ENCODE measurements at regions of chr18 and their contacts with region 1.

Region 1: DNA sequence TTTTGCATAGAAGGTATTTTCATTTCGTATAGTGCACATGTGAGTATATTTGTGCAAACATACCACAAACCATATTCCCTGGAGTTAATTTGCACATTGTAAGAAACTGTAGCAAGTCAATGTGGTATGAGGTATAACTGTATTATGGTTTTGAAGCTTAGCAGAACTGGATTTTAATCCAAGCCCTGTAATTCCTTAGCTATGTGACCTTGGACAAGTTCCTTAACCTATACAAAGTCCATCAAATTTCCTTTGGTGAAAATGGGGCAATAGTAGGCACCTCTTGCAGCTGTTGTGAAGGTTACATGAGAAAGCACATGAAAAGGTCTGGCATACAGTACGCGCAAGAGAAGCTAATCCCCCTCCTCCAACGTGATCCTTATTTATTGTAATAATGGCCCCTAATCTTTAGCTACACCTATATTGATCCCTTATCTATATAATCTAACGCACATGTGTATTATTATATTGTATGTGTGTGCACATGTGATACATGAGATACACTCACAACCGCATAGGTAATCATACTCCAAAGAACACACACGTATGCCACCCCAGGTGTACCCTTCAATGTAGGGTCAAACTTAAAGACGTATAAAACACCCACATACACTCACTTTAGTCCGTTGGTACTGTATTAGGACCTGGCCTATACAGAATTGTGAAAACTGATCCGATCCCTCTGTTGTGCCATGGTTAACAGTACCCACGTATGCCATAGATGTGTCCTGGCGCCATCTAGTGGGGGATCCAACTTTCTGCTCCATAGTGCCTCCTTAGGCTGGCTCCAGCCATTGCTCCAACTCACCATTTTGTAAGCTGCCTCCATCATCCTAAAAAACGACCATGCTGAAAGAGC is 402.9 kb upstream of the SLC14A2 start:
- DNase-seq: peak; percentile 87
- H3K4me3 Mint-ChIP-seq: no peak overlapping the region
- H3K27ac Mint-ChIP-seq: no peak overlapping the region
- H3K4me1 Mint-ChIP-seq: no peaks in the 10 kb centered on the region
- H3K27me3 Mint-ChIP-seq: no peaks in the 10 kb centered on the region
- CTCF ChIP-seq: peak; percentile 99

Region 2: GRCh38 chr18:43620936-43621335 is 1591.5 kb before region 1 on chr18:
- CTCF ChIA-PET with region 1: no interaction called
- intact Hi-C with region 1: loop called (anchors 2 kb)
- DNase-seq: peak; percentile 3
- H3K4me3 Mint-ChIP-seq: no peak overlapping the region
- H3K27ac Mint-ChIP-seq: no peak overlapping the region
- H3K4me1 Mint-ChIP-seq: peaks cover 9% of the 10 kb centered on the region
- H3K27me3 Mint-ChIP-seq: no peaks in the 10 kb centered on the region
- CTCF ChIP-seq: peak; percentile 40

Region 3: DNA sequence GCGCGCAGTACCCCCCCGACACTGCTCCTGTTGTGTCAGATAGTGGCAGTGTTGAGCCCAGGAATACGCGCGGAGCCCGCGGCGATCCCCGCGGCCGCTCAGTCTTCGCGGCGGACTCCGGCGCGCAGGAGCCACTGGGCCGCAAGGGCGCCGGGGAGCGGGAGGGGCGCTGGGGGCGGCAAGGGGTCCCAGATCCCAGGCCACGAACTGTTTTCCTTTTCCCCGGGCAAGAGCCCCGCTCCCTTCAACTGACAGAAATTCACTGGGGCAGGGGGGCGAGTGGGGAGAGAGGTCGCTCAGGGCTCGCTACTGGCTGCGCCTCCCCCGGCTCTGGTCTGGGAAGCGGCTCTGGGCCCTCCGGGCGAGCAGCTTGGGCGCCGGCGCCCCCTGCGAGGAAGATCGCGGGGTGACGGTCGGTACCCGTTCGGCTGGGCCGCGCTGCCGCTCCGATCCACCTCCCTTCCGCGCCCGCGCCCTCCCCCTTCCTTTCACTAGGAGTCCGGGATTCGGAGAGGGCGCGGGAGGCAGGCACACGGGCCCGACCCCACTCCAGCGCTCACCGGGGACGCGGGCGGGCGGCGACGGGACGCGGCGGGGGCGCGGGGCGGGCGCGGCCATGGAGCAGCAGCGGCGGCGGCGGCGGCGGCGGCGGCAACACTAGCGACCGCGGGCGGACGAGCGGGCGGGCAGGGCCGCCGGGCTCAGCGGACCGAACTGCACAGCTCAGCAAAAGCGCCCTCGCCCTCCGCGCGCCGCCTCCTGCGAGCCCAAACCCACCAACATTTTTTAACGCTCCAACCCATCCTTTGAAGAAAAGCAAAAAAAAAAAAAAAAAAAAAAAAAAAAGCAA is 533.1 kb before region 1 on chr18:
- CTCF ChIA-PET with region 1: no interaction called
- intact Hi-C with region 1: loop called (anchors 2 kb)
- DNase-seq: peak; percentile 84
- H3K4me3 Mint-ChIP-seq: peak overlapping the region; percentile 73
- H3K27ac Mint-ChIP-seq: no peak overlapping the region
- H3K4me1 Mint-ChIP-seq: no peaks in the 10 kb centered on the region
- H3K27me3 Mint-ChIP-seq: no peaks in the 10 kb centered on the region
- CTCF ChIP-seq: peak; percentile 58

Region 4: GRCh38 chr18:44901283-44901682 is 311.1 kb before region 1 on chr18:
- CTCF ChIA-PET with region 1: interaction called, 3 read pairs
- intact Hi-C with region 1: loop called (anchors 1 kb)
- DNase-seq: peak; percentile 9
- H3K4me3 Mint-ChIP-seq: no peak overlapping the region
- H3K27ac Mint-ChIP-seq: no peak overlapping the region
- H3K4me1 Mint-ChIP-seq: peaks cover 9% of the 10 kb centered on the region
- H3K27me3 Mint-ChIP-seq: no peaks in the 10 kb centered on the region
- CTCF ChIP-seq: no peak

Region 5: DNA sequence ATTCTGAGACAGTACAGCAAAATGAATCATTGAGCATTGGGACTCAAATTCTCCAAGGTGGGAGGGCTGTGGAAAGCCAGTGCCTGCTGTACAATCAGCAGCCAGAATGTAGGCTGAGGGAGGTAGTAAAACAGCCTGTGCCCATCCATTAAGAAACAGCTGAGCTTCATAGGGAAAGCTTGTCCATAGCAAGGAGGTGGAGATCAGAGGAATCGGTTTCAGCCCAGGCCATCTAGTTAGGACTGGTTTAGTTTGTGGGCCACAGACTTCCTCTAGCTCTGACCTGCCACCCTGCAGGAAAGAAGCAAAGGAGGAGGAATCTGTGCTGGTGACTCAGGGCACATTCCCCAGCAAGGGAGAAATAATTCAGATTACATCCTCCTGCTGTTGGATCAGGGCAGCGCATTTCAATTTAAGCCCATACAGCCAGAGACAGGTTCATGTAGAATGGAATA is 198.3 kb before region 1 on chr18:
- CTCF ChIA-PET with region 1: no interaction called
- intact Hi-C with region 1: loop called (anchors 10 kb)
- DNase-seq: peak; percentile 43
- H3K4me3 Mint-ChIP-seq: no peak overlapping the region
- H3K27ac Mint-ChIP-seq: no peak overlapping the region
- H3K4me1 Mint-ChIP-seq: peaks cover 64% of the 10 kb centered on the region
- H3K27me3 Mint-ChIP-seq: no peaks in the 10 kb centered on the region
- CTCF ChIP-seq: no peak

Region 6: DNA sequence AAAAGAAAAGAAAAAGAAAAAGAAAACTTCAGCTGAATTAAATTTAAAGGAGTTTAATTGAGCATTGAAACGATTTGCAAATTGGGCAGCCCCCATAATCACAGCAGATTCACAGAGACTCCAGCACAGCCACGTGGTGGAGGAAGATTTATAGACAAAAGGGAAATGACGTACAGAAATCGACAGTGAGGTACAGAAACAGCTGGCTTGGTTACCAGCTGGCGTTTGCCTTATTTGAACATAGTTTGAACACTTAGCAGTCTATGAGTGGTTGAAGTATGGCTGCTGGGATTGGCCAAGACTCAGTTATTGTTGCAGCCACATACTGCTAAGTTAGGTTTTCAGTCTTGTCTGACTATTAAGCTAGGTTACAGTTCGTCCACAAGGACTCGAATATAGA is 90.6 kb after region 1 on chr18:
- CTCF ChIA-PET with region 1: no interaction called
- intact Hi-C with region 1: no loop called
- DNase-seq: no peak
- H3K4me3 Mint-ChIP-seq: no peak overlapping the region
- H3K27ac Mint-ChIP-seq: no peak overlapping the region
- H3K4me1 Mint-ChIP-seq: no peaks in the 10 kb centered on the region
- H3K27me3 Mint-ChIP-seq: no peaks in the 10 kb centered on the region
- CTCF ChIP-seq: no peak

Region 7: GRCh38 chr18:45384137-45384961 is 171.9 kb after region 1 on chr18:
- CTCF ChIA-PET with region 1: interaction called, 4 read pairs
- intact Hi-C with region 1: loop called (anchors 5 kb)
- DNase-seq: peak; percentile 71
- H3K4me3 Mint-ChIP-seq: no peak overlapping the region
- H3K27ac Mint-ChIP-seq: no peak overlapping the region
- H3K4me1 Mint-ChIP-seq: no peaks in the 10 kb centered on the region
- H3K27me3 Mint-ChIP-seq: no peaks in the 10 kb centered on the region
- CTCF ChIP-seq: peak; percentile 89

Region 8: GRCh38 chr18:45637546-45638327 is 425.3 kb after region 1 on chr18:
- CTCF ChIA-PET with region 1: no interaction called
- intact Hi-C with region 1: no loop called
- DNase-seq: no peak
- H3K4me3 Mint-ChIP-seq: no peak overlapping the region
- H3K27ac Mint-ChIP-seq: no peak overlapping the region
- H3K4me1 Mint-ChIP-seq: no peaks in the 10 kb centered on the region
- H3K27me3 Mint-ChIP-seq: peaks cover 39% of the 10 kb centered on the region
- CTCF ChIP-seq: no peak

Measured in Calu3 (cell line).